OCI-LY7 (cell line): ENCODE measurements at regions of chr6 and their contacts with region 1.

Region 1: GRCh38 chr6:2885967-2886735 is 17.0 kb downstream of the SERPINB9 start:
- DNase-seq: peak; percentile 88
- H3K4me3 ChIP-seq: peak overlapping the region; percentile 64
- H3K27ac ChIP-seq: peak overlapping the region; percentile 95
- H3K4me1 ChIP-seq: peaks cover 89% of the 10 kb centered on the region
- CTCF ChIP-seq: no peak; the same call in 1 of the 2 replicates

Region 2: DNA sequence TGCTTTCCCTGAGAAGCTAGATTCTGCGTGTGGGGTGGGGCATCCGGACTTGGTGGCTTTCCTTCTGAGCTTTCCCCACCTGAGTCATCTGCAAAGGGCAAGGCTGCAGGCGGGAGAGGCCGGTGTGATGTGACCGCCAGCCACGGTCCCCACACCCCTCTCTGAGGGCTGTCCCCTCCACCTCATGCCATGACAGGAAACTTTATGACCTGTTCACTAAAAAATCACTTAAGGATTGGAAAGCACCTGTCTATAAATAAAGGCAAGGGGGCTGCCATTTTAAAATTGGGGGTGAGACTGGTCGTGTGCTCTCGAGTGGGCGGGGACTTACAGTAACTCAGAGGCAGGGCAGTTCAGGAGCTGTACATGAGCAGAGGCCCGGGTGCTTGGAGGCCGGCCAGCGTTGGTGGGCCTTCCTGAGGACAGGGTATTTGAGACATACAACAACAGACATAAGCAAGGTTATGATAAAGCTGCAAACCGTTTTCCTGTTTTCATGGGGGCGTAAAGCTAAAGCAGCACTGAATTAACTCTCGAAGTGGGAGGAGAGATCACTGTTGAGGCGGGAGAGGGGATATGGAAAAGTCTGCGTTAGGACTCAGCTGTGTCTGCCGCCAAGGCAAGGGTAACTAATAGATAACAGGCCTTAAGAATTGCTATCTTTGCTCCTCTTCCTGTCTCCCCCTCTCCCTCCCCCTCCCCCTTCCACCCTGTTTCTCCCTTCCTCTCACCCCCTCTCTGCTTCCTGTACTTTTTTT is 28.4 kb before region 1 on chr6:
- CTCF ChIA-PET with region 1: no interaction called
- POLR2A ChIA-PET with region 1: interaction called, 12 read pairs
- intact Hi-C with region 1: loop called (anchors 1 kb)
- DNase-seq: peak; percentile 70
- H3K4me3 ChIP-seq: peak overlapping the region; percentile 39
- H3K27ac ChIP-seq: peak overlapping the region; percentile 99
- H3K4me1 ChIP-seq: peaks cover 96% of the 10 kb centered on the region
- CTCF ChIP-seq: no peak

Region 3: DNA sequence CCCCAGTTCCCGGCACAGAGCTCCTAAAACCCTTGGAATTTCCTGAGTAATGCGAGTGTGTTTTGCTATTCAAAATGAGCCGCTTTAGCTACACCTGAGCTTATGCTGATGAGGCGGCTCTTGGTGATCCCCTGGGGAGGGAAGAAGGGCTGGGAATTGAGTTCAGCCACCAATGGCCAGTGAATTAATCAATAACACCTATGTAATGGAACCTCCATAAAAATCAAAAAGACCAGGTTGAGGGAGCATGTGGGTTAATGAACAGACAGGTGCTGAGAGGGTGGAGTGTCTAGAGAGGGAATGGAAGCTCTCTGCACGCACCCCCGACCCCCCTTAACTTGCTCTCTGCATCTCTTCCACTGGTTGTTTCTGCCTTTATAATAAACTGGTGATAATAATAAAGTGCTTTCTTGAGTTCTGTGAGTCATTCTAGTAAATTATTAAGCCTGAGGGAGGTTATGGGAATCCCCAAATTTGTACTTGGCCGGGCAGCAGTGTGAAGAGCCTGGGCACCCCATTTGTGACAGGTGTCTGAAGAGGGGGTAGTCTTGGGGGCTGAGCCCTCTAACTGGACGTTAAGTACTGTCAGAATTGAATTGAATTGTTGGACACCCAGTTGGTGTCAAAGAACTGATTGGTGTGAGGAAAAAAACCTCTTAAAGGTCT is 19.8 kb before region 1 on chr6:
- CTCF ChIA-PET with region 1: interaction called, 6 read pairs
- POLR2A ChIA-PET with region 1: interaction called, 13 read pairs
- intact Hi-C with region 1: loop called (anchors 1 kb)
- DNase-seq: no peak
- H3K4me3 ChIP-seq: peak overlapping the region; percentile 28
- H3K27ac ChIP-seq: peak overlapping the region; percentile 99
- H3K4me1 ChIP-seq: peaks cover 78% of the 10 kb centered on the region
- CTCF ChIP-seq: no peak